HepG2 (cell line): ENCODE measurements at regions of chr15 and their contacts with region 1.

Region 1: DNA sequence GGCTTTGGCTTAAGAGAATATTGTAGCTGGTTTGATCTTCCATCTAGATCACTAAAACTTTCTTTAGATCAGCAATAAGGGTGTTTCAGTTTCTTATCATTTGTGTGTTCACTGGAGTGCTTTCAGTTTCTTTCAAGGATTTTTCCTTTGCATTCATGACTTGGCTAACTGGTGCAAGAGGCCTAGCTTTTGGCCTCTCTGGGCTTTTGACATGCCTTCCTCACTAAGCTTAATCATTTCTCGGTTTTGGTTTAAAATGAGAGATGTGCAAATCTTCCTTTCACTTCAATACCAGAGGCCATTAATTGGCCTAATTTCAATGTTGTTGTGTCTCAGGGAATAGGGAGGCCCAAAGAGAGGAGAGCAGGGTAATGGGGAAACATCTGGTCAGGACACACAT is 30.3 kb upstream of the CCNB2 start:
- DNase-seq: no peak
- ATAC-seq: no peak
- H3K4me3 ChIP-seq: no peak overlapping the region
- H3K27ac ChIP-seq: no peak overlapping the region
- H3K4me1 ChIP-seq: no peaks in the 10 kb centered on the region
- H3K27me3 ChIP-seq: no peaks in the 10 kb centered on the region
- CTCF ChIP-seq: no peak
- EP300 ChIP-seq: no peak
- POLR2A ChIP-seq: no peak
- RAD21 ChIP-seq: no peak

Region 2: GRCh38 chr15:58770857-58771620 is 303.6 kb before region 1 on chr15 and contains the start of gene MINDY2:
- CTCF ChIA-PET with region 1: no interaction called
- POLR2A ChIA-PET with region 1: no interaction called
- in situ Hi-C with region 1: no loop called
- intact Hi-C with region 1: no loop called
- DNase-seq: peak; percentile 96
- ATAC-seq: peak; percentile 96
- H3K4me3 ChIP-seq: peak within 1 kb of the TSS; percentile 81 to 94 (median 94)
- H3K27ac ChIP-seq: peak within 1 kb of the TSS; percentile 89
- H3K4me1 ChIP-seq: peaks cover 40% of the 10 kb centered on the region
- H3K27me3 ChIP-seq: no peaks in the 10 kb centered on the region; a peak in 1 of 5 replicates
- CTCF ChIP-seq: peak; percentile 74
- EP300 ChIP-seq: peak in 1 of 2 experiments; percentile 41; a peak in 1 of 4 replicates
- POLR2A ChIP-seq: peak; percentile 81 to 83; a peak in 3 of 4 replicates
- RAD21 ChIP-seq: no peak; the same call in 1 of the 2 replicates
- total RNA-seq, gene MINDY2: 12.6 and 15.6 TPM in 2 replicates

Region 3: DNA sequence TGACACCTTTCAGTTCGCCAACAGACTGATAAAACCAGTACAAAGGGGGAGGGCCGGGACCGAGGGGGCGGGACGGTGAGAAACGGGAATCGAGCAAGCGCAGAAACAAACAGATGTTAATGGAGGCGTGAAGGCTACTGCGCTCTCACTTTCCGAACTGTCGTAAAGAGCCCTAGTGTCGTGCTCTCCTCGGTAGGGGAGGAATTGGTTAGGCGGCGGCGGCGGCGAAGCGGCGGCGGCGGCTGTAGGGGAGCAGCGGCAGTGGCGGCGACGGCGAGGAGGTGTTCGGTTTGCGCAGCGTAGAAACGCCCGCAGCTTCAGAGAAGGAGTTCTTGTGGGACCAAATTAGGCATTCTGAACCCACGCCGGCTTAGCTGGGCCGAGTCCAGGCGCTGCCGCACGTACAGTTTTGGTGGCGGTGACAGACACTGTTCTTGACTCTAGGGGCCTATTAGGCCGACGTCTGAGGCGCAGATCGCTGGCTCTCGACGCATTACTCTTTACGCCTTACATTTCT is 87.1 kb before region 1 on chr15 and contains the start of gene RNF111:
- CTCF ChIA-PET with region 1: no interaction called
- POLR2A ChIA-PET with region 1: no interaction called
- in situ Hi-C with region 1: no loop called
- intact Hi-C with region 1: loop called (anchors 10 kb)
- DNase-seq: peak; percentile 93
- ATAC-seq: peak; percentile 80
- H3K4me3 ChIP-seq: peak within 1 kb of the TSS; percentile 90 to 99 (median 97)
- H3K27ac ChIP-seq: peak within 1 kb of the TSS; percentile 97
- H3K4me1 ChIP-seq: peaks cover 37% of the 10 kb centered on the region
- H3K27me3 ChIP-seq: no peaks in the 10 kb centered on the region; a peak in 1 of 5 replicates
- CTCF ChIP-seq: no peak
- EP300 ChIP-seq: no peak
- POLR2A ChIP-seq: peak; percentile 50 to 69; a peak in 3 of 4 replicates
- RAD21 ChIP-seq: no peak
- total RNA-seq, gene RNF111: 12.1 and 16.0 TPM in 2 replicates

Region 4: GRCh38 chr15:59138243-59138642 is 63.6 kb after region 1 on chr15:
- CTCF ChIA-PET with region 1: no interaction called
- POLR2A ChIA-PET with region 1: no interaction called
- in situ Hi-C with region 1: loop called (anchors 10 kb)
- intact Hi-C with region 1: no loop called
- DNase-seq: peak; percentile 54
- ATAC-seq: peak; percentile 98
- H3K4me3 ChIP-seq: no peak overlapping the region
- H3K27ac ChIP-seq: no peak overlapping the region
- H3K4me1 ChIP-seq: no peaks in the 10 kb centered on the region
- H3K27me3 ChIP-seq: no peaks in the 10 kb centered on the region
- CTCF ChIP-seq: peak; percentile 83
- EP300 ChIP-seq: no peak
- POLR2A ChIP-seq: no peak
- RAD21 ChIP-seq: peak; percentile 69